ENCODE measurements at regions of chr6 and their contacts with region 1.

Region 1: DNA sequence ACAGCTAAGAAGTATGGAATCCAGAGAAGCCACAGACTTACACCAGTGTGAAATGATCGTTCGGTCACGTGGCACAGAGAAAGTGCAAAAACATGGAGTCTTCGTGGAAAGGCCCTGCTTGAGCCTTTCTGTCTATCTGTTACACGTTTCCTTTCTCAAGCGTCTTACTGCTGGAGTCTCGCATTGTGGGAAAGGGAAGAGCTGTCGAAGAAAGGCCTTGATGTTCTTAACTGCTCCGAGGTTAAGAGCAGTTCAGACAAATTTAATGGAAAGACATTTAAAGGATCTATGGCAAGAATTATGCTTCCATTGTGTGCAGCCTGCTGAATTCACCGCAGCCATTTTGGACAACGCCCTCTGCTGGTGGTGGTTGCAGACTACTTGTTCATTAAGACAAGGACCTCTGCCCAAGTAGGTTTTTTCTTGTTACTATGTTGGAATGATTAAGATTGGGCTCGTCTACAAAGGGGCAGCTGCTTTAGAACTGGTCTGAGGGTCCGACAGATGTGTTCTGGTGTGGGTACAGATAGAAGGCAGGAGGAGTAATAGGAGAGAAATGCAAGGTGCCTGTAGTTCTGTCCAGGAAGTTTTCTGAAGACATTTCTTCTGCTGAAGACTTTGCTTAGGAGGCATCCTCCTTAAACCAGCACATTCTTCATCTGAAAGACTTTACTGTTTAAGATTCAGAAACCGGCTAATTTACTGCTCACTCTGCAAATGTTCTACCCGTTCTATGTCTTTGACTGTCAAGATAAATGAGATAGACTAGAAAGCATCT is 24.7 kb upstream of the CCN6 start:
- DNase-seq: peak; percentile 74
- ATAC-seq: no peak
- H3K4me3 Mint-ChIP-seq: no peak overlapping the region
- H3K27ac Mint-ChIP-seq: peak overlapping the region; percentile 78
- H3K4me1 Mint-ChIP-seq: peaks cover 44% of the 10 kb centered on the region
- H3K27me3 Mint-ChIP-seq: no peaks in the 10 kb centered on the region

Region 2: GRCh38 chr6:111997078-111997852 is 32.0 kb before region 1 on chr6:
- CTCF ChIA-PET with region 1: interaction called, 10 read pairs
- POLR2A ChIA-PET with region 1: no interaction called
- DNase-seq: peak; percentile 85
- ATAC-seq: peak; percentile 85
- H3K4me3 Mint-ChIP-seq: peak overlapping the region; percentile 60
- H3K27ac Mint-ChIP-seq: peak overlapping the region; percentile 73
- H3K4me1 Mint-ChIP-seq: peaks cover 42% of the 10 kb centered on the region
- H3K27me3 Mint-ChIP-seq: no peaks in the 10 kb centered on the region

Region 3: DNA sequence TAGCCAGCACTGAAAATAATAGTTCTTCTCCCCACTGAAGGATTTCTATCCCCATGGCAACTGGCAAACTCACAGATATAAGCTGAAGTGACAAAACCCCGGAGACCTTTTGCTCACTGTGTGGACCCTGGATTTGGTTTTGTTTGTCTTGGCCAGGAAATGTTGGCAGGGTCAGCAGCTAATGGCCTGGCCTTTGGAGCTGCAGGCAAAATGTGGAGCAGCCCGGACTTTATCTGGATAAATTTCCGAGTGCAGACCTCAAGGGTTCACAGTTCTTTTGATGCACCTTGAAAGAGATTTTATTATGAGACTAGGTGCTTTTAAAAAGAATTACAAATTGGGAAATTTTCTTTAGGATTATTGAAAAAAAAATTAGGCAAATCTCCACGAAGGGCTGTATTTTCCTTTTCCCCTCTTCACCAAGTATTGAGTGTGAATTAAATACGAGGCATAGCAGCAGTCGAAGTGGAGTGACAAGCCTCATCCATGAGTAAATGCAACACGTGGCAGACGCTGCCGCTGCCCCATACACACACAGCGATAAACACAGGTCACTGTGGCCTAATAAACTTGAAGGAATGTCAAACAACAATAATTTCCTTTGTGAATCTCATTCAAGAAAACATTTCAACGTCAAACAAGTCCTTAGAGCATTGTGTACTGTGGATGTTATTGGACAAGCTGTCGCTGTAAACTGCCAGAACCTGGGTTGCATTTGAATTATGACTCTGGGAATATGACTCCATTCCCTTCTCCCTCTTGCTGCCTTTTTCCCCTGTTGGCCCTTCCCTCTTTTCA is 10.4 kb before region 1 on chr6:
- CTCF ChIA-PET with region 1: interaction called, 61 read pairs
- POLR2A ChIA-PET with region 1: interaction called, 4 read pairs
- DNase-seq: no peak
- ATAC-seq: no peak
- H3K4me3 Mint-ChIP-seq: no peak overlapping the region
- H3K27ac Mint-ChIP-seq: no peak overlapping the region
- H3K4me1 Mint-ChIP-seq: peaks cover 11% of the 10 kb centered on the region
- H3K27me3 Mint-ChIP-seq: no peaks in the 10 kb centered on the region

Measured in activated CD8-positive, alpha-beta T cell treated with anti-CD3 and anti-CD28 coated beads, Interleukin-2, amount 10 ng/mL, durations not matched to agents 7 days and 5 days (primary cell).